Posterior vena cava (tissue), 2 donors: ENCODE measurements at regions of chr5 and their contacts with region 1.

Region 1: GRCh38 chr5:1536322-1536845 is 12.6 kb upstream of the LPCAT1 start:
- DNase-seq: peak; percentile 64

Region 2: DNA sequence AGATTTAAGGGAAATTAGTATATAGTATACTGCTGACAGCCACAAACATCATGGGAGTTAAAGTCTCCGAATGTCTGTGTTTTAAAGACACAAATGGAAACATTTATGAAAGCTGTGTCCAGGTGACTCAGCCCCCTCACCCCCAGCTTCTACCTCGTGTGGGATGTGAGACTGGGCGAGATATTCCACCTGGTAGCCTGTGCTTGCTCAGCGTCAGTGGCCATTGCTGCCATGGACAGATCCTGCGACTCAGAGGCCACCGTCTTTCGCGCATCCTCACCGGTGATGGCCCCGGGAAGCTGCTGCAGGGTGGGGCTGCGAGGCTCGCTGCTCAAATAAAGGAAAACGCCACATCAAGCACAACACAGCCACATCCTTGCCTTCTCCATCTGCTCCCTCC is 1124.7 kb before region 1 on chr5:
- intact Hi-C with region 1: loop called in 1 of 2 experiments (anchors 5 kb)
- DNase-seq: peak; percentile 25

Region 3: DNA sequence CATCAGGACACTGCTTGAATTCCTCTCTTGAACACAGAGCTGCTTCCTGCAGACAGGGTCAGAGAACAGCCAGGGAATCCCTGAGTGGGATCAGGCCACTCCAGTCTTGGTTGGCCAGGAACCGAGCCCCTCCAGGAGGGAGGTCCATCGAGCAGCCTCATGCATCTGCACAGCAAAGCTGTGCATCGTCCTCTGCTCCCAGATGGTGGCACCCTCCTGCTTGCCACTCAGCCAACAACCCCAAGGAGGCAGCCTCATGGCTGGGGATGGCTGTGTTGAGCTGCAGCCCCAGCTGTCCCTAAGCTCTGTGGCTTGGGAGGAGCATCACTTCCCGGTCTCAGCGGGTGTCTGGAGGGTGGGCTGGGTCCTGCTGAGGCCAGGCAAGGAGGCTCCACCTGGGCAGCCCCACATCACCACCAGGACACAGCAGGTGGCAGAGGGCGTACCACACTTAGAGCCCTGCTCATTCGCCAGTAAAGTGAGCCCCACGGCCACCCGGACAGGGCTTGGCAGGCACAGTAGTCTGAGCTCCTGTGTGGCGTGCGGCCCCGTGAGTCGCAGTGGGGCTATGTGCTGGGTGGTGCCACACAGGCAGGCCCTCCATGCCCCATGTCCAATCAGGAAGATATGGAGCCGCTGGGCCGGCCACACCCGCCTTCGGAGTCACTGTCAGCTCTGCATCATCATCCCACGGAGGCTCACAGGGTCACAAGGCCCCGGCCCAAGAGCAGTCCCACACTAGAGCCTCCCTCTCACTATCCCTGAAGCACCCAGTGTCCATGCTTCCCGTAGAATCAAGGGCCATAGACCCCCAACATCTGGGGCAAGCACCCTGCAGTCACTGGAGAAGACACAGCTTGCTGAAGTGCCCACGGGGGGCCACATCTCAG is 24.5 kb before region 1 on chr5:
- intact Hi-C with region 1: loop called in 1 of 2 experiments (anchors 1 kb)
- DNase-seq: peak; percentile 74

Region 4: GRCh38 chr5:1820381-1820780 is 284.0 kb after region 1 on chr5:
- intact Hi-C with region 1: no loop called
- DNase-seq: peak; percentile 49